H1 (cell line): ENCODE measurements at regions of chr2 and their contacts with region 1.

Region 1: DNA sequence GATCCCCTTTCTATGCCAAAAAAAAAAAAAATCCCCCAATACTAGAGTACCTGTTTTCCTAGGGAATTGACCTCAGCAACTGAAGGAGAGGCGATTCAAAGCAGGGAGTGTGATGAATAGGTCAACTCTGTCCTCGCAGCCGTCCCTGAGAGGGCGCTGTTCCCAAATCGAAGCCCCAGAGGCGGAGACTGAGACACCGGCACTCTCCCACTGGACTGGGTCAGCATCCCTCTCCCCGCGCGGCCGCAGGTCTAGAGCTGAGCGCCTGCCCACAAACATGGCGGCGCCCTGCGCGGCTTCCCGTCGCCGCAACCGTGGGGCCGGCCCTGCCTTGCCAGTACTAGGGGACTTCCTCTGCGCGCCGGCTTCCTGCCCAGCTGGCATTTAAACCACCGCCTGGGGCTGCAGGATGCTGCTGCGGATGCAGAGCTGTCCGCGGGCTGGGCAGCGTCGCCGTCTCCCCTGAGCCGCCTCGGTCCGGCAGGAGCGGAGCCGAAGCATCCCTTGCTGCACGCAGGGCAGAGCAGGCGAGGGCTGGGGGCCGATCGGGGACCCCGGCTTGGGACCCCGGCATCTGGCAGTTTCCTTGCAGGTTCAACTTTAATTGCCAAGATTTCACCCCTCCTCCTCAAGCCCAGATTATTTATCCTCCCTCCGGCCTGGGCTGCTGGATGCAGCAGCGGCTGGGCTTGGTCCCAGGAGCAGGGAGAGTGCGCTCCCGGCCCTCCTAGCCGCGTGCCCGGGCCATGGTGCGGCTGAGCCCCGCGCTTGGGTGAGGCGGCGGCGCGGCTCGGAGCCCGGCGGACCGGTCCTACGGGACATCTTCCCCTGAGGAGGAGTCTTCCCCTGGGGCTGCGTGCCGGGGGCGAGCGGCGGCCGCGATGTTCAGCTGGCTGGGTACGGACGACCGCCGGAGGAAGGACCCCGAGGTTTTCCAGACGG is at the start of gene EHD3:
- DNase-seq: peak; percentile 94 to 95
- H3K4me3 ChIP-seq: peak within 1 kb of the TSS; percentile 54 to 84 (median 70)
- H3K27ac ChIP-seq: no peak within 1 kb of the TSS
- H3K4me1 ChIP-seq: peaks cover 4 to 6% (median 4%) of the 10 kb centered on the region in 4 experiments; a peak in 5 of 7 replicates
- H3K27me3 ChIP-seq: peaks cover 0 to 8% (median 5%) of the 10 kb centered on the region in 4 experiments; a peak in 4 of 7 replicates
- CTCF ChIP-seq: peak; percentile 69 to 91 (median 84)
- EP300 ChIP-seq: no peak
- POLR2A ChIP-seq: peak in 1 of 2 experiments; percentile 91; a peak in 2 of 3 replicates
- RAD21 ChIP-seq: peak; percentile 57 to 63
- total RNA-seq, gene EHD3: 12.0 TPM in 2 replicates

Region 2: GRCh38 chr2:31089645-31090044 is 144.4 kb before region 1 on chr2:
- CTCF ChIA-PET with region 1: no interaction called
- POLR2A ChIA-PET with region 1: no interaction called
- DNase-seq: no peak
- H3K4me3 ChIP-seq: no peak overlapping the region
- H3K27ac ChIP-seq: no peak overlapping the region
- H3K4me1 ChIP-seq: peaks cover 0 to 2% (median 0%) of the 10 kb centered on the region in 4 experiments; a peak in 1 of 7 replicates
- H3K27me3 ChIP-seq: no peaks in the 10 kb centered on the region
- CTCF ChIP-seq: peak in 1 of 3 experiments; percentile 27; a peak in 1 of 4 replicates
- EP300 ChIP-seq: no peak
- POLR2A ChIP-seq: no peak
- RAD21 ChIP-seq: peak in 1 of 2 experiments; percentile 29; a peak in 2 of 4 replicates

Region 3: DNA sequence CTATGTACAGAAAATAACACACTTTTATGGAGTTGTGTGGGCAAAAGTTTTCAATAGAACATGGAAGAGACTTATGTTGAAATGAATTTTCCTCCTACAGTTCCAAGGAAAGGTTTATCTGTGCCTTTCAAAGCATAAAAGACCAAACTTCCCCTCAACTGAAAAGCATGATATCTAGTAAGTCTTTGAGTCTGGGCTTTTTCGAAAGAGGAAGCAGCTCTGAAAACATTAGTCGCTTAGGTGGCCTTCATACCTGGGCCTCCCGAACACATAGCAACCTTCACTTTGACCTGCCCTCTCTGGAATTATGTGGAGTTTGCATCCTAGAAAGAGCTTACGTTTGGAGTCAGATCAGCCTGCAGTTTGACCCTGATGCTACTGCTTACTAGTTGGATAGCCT is 11.9 kb before region 1 on chr2:
- CTCF ChIA-PET with region 1: interaction called, 10 read pairs
- POLR2A ChIA-PET with region 1: no interaction called
- DNase-seq: no peak
- H3K4me3 ChIP-seq: no peak overlapping the region
- H3K27ac ChIP-seq: no peak overlapping the region
- H3K4me1 ChIP-seq: no peaks in the 10 kb centered on the region
- H3K27me3 ChIP-seq: no peaks in the 10 kb centered on the region; a peak in 1 of 7 replicates
- CTCF ChIP-seq: no peak
- EP300 ChIP-seq: no peak
- POLR2A ChIP-seq: no peak
- RAD21 ChIP-seq: no peak

Region 4: DNA sequence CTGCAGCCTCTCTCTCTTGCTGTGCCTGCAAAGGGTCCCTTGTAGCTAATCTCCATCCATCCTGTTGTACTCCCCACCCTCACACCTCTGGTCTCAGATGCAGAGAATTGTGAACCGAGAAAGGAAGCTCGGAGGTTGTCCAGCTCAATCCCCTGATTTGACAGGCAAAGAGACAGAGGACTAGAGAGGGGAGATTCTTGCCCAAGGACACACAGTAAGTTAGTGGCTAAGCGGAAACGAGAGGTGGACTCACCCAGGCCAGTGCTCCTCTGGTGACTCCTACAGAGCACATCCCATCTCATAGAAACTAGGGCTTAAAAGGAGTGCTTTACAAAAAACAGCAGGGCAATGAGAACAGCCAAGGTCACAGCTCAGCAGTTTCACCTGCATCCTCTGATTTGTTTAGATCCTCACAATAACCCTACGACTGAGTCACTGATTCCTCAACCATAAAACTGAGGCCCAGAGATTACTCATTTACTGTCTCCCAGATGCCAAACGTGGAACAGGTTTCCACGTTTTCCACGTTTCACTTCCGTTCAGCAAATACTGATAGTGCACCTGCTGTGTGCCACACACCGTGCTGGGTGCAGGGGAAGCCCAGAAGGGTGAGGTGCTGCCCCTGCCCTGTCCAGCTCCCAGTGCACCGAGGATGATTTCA is 22.0 kb after region 1 on chr2:
- CTCF ChIA-PET with region 1: interaction called, 4 read pairs
- POLR2A ChIA-PET with region 1: interaction called, 10 read pairs
- DNase-seq: no peak
- H3K4me3 ChIP-seq: no peak overlapping the region
- H3K27ac ChIP-seq: no peak overlapping the region
- H3K4me1 ChIP-seq: peaks cover 0 to 8% (median 2%) of the 10 kb centered on the region in 4 experiments; a peak in 3 of 7 replicates
- H3K27me3 ChIP-seq: no peaks in the 10 kb centered on the region
- CTCF ChIP-seq: no peak
- EP300 ChIP-seq: no peak
- POLR2A ChIP-seq: no peak
- RAD21 ChIP-seq: no peak

Region 5: DNA sequence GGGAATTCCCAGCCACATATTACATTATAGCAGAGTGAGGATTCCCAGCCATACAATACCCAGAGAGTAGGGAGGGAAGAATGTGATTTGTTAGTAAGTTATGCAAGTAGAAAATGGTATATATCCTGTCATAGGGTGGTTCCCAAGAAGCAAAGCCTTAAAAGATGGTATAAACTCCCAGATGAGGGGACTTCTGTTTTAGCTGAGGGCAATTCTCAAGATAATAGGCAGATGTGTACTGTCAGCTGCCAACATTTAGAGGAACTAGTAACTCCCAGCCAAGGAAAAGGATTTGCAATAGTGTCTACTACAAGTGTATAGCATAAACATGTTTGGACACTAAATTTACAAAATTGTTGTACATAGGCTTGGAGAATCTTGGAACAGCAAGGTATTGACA is 94.0 kb after region 1 on chr2:
- CTCF ChIA-PET with region 1: interaction called, 30 read pairs
- POLR2A ChIA-PET with region 1: no interaction called
- DNase-seq: no peak
- H3K4me3 ChIP-seq: no peak overlapping the region
- H3K27ac ChIP-seq: no peak overlapping the region
- H3K4me1 ChIP-seq: peaks cover 0 to 1% (median 0%) of the 10 kb centered on the region in 4 experiments; a peak in 2 of 7 replicates
- H3K27me3 ChIP-seq: no peaks in the 10 kb centered on the region; a peak in 2 of 7 replicates
- CTCF ChIP-seq: no peak
- EP300 ChIP-seq: no peak
- POLR2A ChIP-seq: no peak
- RAD21 ChIP-seq: no peak